Adrenal gland (tissue), 19 donors: ENCODE measurements at regions of chr6 and their contacts with region 1.

Region 1: GRCh38 chr6:53410508-53411258 is 61.9 kb upstream of the ELOVL5 start:
- DNase-seq: peak; percentile 50 to 76 (median 65)
- H3K4me3 ChIP-seq: no peak overlapping the region
- H3K27ac ChIP-seq: no peak overlapping the region
- H3K4me1 ChIP-seq: peaks cover 0 to 5% of the 10 kb centered on the region in 2 donors
- H3K27me3 ChIP-seq: no peaks in the 10 kb centered on the region
- CTCF ChIP-seq: peak; percentile 39 to 81 (median 71)
- POLR2A ChIP-seq: no peak

Region 2: GRCh38 chr6:53361549-53362031 is 49.1 kb before region 1 on chr6:
- intact Hi-C with region 1: loop called in 1 of 2 experiments (anchors 10 kb)
- DNase-seq: peak; percentile 60 to 86 (median 75)
- H3K4me3 ChIP-seq: no peak overlapping the region
- H3K27ac ChIP-seq: peak overlapping the region in 3 of 5 donors; percentile 44 to 97 (median 92)
- H3K4me1 ChIP-seq: peaks cover 14 to 18% of the 10 kb centered on the region in 2 donors
- H3K27me3 ChIP-seq: no peaks in the 10 kb centered on the region
- CTCF ChIP-seq: no peak
- POLR2A ChIP-seq: no peak

Region 3: GRCh38 chr6:53476964-53477363 is 66.3 kb after region 1 on chr6:
- intact Hi-C with region 1: loop called in 1 of 2 experiments (anchors 10 kb)
- DNase-seq: no peak
- H3K4me3 ChIP-seq: no peak overlapping the region
- H3K27ac ChIP-seq: no peak overlapping the region
- H3K4me1 ChIP-seq: no peaks in the 10 kb centered on the region
- H3K27me3 ChIP-seq: no peaks in the 10 kb centered on the region
- CTCF ChIP-seq: no peak
- POLR2A ChIP-seq: no peak

Region 4: DNA sequence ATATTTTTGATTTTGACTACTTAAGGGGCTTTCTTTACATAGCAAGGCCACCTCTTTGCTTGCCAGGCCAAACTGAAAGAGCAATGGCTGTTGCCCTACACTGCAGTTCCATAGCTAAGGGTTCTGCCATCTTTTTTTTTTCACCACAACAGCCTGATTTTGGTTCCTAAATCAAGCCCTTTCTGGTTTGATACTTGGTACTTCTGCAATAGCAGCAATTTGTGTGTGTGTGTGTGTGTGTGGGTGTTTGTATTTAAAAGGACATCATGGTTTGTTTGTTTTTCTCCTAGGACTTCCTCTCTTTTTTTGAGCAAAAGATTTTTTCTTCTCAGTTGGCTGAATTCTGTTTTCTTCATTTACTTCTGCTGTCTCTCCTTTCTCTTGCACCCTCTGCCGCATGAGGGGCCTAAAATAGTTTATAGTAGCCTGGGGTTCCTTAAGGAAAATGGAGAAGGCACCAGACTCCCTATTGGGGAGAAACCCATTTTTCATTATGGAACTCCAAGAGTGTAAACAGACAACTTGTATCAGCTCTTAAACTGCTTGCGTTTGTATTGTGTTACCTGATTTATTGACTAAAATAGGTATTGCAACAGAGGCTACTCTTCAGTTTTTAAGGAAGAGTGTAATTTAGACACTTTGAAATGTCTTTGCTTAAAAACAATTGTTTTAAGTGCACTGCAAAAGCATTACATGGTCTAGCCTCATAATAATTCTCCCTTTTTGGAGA is 146.5 kb after region 1 on chr6:
- intact Hi-C with region 1: no loop called
- DNase-seq: no peak
- H3K4me3 ChIP-seq: no peak overlapping the region
- H3K27ac ChIP-seq: no peak overlapping the region
- H3K4me1 ChIP-seq: no peaks in the 10 kb centered on the region
- H3K27me3 ChIP-seq: no peaks in the 10 kb centered on the region
- CTCF ChIP-seq: no peak
- POLR2A ChIP-seq: no peak

Region 5: DNA sequence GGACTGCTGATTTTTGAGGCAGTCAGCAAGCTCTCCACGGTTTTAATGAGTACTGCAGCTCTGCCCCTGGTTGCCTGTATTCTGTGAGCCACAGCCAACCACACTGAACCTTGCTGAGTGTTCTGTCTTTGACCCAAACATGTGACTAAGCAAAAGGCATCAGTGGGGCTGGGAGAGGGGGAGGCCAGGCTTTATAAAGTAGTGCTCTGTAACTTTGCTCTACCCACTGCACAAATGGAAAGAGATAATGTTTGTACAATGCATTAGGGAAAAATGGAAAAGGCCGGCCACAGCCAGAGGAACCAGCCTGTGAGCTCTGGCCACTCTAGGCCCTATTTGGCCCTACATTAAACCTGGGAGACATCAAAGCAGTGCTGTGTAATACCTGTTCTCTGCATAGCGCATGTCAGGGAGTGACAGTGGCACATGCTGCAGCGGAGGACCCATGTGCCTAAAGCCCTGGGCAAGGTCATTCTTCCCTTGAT is 232.8 kb after region 1 on chr6:
- intact Hi-C with region 1: no loop called
- DNase-seq: no peak
- H3K4me3 ChIP-seq: no peak overlapping the region
- H3K27ac ChIP-seq: no peak overlapping the region
- H3K4me1 ChIP-seq: no peaks in the 10 kb centered on the region
- H3K27me3 ChIP-seq: no peaks in the 10 kb centered on the region
- CTCF ChIP-seq: no peak
- POLR2A ChIP-seq: no peak